Stomach (tissue), 19 donors: ENCODE measurements at regions of chr19 and their contacts with region 1.

Region 1: GRCh38 chr19:47157431-47158321 is 27.0 kb downstream of the SAE1 start:
- DNase-seq: peak; percentile 33 to 69
- H3K4me3 ChIP-seq: peak overlapping the region in 1 of 4 donors; percentile 4
- H3K27ac ChIP-seq: peak overlapping the region; percentile 25 to 84 (median 76)
- H3K4me1 ChIP-seq: peaks cover 47 to 86% (median 60%) of the 10 kb centered on the region in 4 donors
- H3K27me3 ChIP-seq: no peaks in the 10 kb centered on the region
- CTCF ChIP-seq: no peak
- EP300 ChIP-seq: no peak
- POLR2A ChIP-seq: no peak

Region 2: DNA sequence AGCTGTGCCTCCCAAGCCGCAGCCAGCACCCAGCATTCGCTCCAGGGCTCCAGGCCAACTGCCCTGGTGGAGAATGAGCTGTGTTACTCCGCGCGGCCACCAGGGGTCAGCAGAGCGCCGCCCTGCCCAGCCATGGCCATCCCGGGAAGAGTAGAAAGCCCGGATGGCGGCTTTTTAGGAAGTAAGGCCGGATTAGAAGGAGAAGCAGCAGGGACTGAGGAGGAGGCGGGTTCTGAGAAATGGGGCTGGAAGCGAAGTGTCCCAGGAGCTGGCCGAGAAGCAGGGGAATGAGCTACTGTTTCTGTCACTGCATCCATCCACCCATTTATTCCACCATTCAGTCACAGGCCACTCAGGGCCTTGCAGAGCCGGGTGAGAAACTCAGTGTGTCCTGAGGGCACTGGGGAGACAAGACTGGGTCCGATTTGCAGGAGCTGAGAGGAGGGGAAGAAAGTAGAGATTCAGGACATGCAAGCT is 144.6 kb before region 1 on chr19:
- intact Hi-C with region 1: no loop called
- DNase-seq: peak; percentile 85 to 92
- H3K4me3 ChIP-seq: no peak overlapping the region
- H3K27ac ChIP-seq: no peak overlapping the region
- H3K4me1 ChIP-seq: peaks cover 0 to 7% (median 5%) of the 10 kb centered on the region in 4 donors
- H3K27me3 ChIP-seq: peaks cover 0 to 23% (median 0%) of the 10 kb centered on the region in 3 donors
- CTCF ChIP-seq: peak in 6 of 7 experiments; percentile 62 to 97 (median 96)
- EP300 ChIP-seq: no peak
- POLR2A ChIP-seq: no peak

Region 3: GRCh38 chr19:47209319-47210179 is 51.9 kb after region 1 on chr19:
- intact Hi-C with region 1: loop called (anchors 10 kb)
- DNase-seq: no peak
- H3K4me3 ChIP-seq: no peak overlapping the region
- H3K27ac ChIP-seq: peak overlapping the region in 2 of 5 donors; percentile 5 to 76
- H3K4me1 ChIP-seq: peaks cover 0 to 13% (median 12%) of the 10 kb centered on the region in 4 donors
- H3K27me3 ChIP-seq: no peaks in the 10 kb centered on the region
- CTCF ChIP-seq: no peak
- EP300 ChIP-seq: no peak
- POLR2A ChIP-seq: no peak